Mucosa of descending colon (tissue), 3 donors: ENCODE measurements at regions of chr5 and their contacts with region 1.

Region 1: DNA sequence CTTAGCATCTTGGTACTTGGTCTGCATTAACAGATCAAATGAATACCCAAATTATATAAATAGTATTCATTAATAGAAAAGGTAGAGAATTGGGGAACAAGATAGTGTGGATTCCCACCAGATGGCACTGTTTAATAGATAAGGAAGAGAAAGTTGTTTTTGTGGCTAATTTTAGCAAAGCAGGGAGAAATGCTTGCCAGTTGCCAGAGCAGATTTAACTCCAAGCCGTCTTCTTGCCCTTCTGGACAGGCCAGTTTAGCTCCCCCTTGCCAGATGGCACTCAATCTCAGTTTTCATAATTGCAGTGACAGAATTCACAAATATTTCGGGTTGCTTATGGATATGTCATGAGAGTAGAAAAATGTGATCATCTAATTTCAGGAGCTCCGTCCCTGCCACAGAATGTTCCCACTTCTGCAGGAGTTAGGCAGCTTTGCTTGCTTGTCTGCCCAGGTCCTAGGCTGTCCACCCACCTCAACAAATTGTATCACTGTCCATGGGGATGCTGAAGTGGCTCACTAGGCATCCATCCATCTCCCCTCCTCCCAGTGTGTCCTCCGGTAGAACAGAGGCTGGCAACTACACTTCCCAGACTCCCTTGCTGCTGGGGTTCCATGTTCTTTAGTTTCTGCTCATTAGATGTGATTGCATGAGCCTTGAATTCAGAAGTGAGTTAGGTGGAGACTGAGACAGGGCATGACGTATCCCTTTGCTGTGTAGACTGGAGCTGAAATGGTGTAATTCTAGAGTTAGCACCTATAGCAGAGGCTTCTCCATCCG is 11.8 kb upstream of the HEXB start:
- DNase-seq: no peak
- ATAC-seq: peak; percentile 26
- H3K4me3 ChIP-seq: no peak overlapping the region
- H3K4me1 ChIP-seq: no peaks in the 10 kb centered on the region
- CTCF ChIP-seq: peak; percentile 8

Region 2: DNA sequence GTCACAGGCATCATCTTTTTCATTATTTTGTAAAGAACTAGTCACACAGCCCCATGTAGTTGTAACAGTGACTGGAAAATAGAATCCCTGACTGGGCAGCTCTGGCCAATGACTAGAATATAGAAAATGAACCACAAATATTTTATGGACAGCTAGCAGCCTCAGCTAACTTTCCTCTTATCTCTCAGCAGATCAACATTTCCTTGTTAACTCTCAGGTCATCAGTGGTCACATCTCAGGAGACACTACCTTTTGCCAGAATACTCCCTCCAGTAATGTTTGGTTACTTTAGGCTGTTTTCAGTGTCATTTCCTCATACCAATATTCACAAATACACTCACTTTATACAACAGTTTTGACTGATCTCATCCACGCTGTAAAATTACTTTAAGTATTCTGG is 149.1 kb after region 1 on chr5:
- intact Hi-C with region 1: no loop called
- DNase-seq: no peak
- ATAC-seq: no peak
- H3K4me3 ChIP-seq: no peak overlapping the region
- H3K4me1 ChIP-seq: no peaks in the 10 kb centered on the region
- CTCF ChIP-seq: no peak

Region 3: GRCh38 chr5:74919487-74919886 is 246.3 kb after region 1 on chr5:
- intact Hi-C with region 1: loop called in 1 of 2 experiments (anchors 2 kb)
- DNase-seq: no peak
- ATAC-seq: peak; percentile 60
- H3K4me3 ChIP-seq: no peak overlapping the region
- H3K4me1 ChIP-seq: no peaks in the 10 kb centered on the region
- CTCF ChIP-seq: peak; percentile 8

Region 4: DNA sequence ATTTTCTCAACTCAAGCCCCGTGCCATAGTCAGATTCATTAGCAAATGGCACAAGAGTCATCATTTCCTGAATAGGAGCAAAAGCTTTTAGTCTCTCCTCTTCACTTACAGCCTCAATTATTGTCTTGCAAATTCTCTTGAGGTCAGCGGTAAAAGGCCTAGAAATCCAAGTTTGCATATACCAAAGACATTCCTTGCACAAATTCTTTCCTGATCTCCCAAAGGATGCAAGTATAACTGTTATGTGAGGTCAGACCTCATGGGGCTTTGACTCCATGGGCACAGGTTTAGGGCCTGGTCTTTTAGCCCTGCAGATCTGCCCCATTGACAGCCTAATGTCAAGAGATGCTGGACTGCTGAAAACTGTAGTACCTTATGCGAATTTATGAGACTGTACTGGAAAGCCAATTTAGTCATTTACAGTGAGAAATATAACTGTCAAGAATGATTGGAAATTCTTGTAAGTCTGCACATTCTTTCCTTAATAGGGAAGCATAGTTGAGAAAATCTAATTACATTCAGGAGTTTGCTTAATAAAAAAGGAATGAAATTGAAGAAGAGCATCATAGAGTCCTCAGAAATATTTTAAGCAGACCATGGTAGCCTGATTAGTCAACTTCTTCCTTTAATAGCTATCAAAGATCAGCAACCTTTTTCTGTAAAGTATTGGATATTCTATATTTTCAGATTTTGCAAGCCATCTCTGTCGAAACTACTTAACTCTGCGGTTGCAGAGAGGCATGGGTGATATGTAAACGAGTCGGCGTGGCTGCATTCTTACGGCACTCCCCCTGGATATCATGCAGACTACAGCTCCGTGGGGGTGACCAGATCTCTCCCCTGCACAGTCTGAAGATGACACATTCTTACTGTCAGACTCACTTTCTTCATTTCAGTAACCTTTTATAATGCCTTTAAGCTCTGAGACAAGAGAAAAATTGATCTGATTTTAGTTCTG is 333.9 kb after region 1 on chr5:
- intact Hi-C with region 1: no loop called
- DNase-seq: no peak
- ATAC-seq: no peak
- H3K4me3 ChIP-seq: no peak overlapping the region
- H3K4me1 ChIP-seq: no peaks in the 10 kb centered on the region
- CTCF ChIP-seq: no peak